Activated T-helper 1 cell treated with anti-CD3 and anti-CD28 coated beads, Interleukin-12 subunit alpha, Interleukin-12 subunit beta, Interleukin-2, Interleukin-4 antibody, amounts not matched to agents 30 ng/mL and 10 ng/mL and 1 ng/mL, durations not matched to agents 14 hours and 24 hours and 36 hours (primary cell): ENCODE measurements at regions of chr5 and their contacts with region 1.

Region 1: GRCh38 chr5:142783601-142784341 is 13.6 kb downstream of the ARHGAP26 start:
- DNase-seq: peak; percentile 57
- H3K4me3 Mint-ChIP-seq: peak overlapping the region; percentile 32
- H3K27ac Mint-ChIP-seq: peak overlapping the region; percentile 62
- H3K4me1 Mint-ChIP-seq: peaks cover 63% of the 10 kb centered on the region
- H3K27me3 Mint-ChIP-seq: no peaks in the 10 kb centered on the region

Region 2: DNA sequence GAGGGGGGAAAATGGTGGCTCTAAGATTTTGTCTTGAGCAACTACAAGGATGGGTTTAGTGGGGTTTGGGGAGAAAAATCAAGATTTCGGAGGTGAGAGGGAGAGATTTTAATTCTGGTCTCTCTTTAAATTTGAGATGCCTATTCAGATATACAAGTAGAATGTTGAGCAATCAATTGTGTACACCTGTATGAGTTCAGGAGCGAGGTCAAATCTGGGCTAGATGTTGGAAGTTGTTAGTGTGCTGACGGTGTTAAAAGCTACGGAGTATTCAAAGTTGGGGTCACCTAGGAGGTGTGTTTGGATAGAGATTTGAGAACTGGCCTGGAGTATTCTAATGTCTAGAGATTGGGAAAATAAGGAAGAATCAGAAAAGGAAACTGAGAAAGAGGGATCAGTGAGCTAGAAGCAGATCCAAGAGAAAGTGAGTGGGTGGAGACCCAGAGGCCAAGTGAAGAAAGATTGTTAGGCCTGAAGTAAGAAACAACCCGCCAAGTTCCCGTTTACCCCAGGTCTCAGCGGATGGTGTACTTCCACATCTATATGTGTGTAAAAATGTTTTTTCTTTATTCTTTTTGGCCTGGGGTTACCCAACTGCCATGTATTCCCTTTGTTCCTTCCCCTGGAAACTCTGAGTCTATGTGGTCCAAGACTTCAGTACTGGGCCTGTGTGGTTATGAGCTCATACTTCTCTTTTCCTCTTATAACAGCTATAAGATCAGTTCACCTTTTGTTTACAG is 25.5 kb before region 1 on chr5:
- intact Hi-C with region 1: loop called (anchors 1 kb)
- DNase-seq: no peak
- H3K4me3 Mint-ChIP-seq: no peak overlapping the region
- H3K27ac Mint-ChIP-seq: peak overlapping the region; percentile 10
- H3K4me1 Mint-ChIP-seq: peaks cover 18% of the 10 kb centered on the region
- H3K27me3 Mint-ChIP-seq: peaks cover 6% of the 10 kb centered on the region

Region 3: GRCh38 chr5:142800776-142801494 is 17.2 kb after region 1 on chr5:
- intact Hi-C with region 1: loop called (anchors 1 kb)
- DNase-seq: peak; percentile 53
- H3K4me3 Mint-ChIP-seq: peak overlapping the region; percentile 73
- H3K27ac Mint-ChIP-seq: peak overlapping the region; percentile 93
- H3K4me1 Mint-ChIP-seq: peaks cover 67% of the 10 kb centered on the region
- H3K27me3 Mint-ChIP-seq: no peaks in the 10 kb centered on the region

Region 4: GRCh38 chr5:142826741-142827732 is 43.3 kb after region 1 on chr5:
- intact Hi-C with region 1: loop called (anchors 1 kb)
- DNase-seq: no peak
- H3K4me3 Mint-ChIP-seq: peak overlapping the region; percentile 25
- H3K27ac Mint-ChIP-seq: peak overlapping the region; percentile 57
- H3K4me1 Mint-ChIP-seq: peaks cover 70% of the 10 kb centered on the region
- H3K27me3 Mint-ChIP-seq: no peaks in the 10 kb centered on the region

Region 5: DNA sequence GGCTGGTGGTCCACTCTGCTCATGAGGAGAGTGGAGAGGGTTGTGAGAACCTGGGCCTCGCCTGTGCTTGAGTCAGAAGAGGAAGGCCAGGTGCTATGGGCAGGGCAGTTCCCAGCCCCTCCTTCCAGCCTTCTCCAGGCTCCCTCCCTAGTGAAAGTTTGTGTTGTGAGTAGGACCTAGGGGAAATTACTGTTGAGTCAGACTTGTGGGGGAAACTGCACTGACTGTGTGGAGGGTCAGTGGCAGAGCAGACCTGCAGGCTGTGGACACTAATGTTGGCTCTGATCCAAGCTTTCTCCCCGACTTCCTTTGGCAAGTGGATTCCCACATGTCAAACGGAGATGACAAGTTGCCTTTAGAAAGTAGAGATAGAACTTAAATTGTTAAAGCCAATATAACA is 89.0 kb after region 1 on chr5:
- intact Hi-C with region 1: loop called (anchors 1 kb)
- DNase-seq: no peak
- H3K4me3 Mint-ChIP-seq: no peak overlapping the region
- H3K27ac Mint-ChIP-seq: no peak overlapping the region
- H3K4me1 Mint-ChIP-seq: peaks cover 13% of the 10 kb centered on the region
- H3K27me3 Mint-ChIP-seq: peaks cover 3% of the 10 kb centered on the region

Region 6: DNA sequence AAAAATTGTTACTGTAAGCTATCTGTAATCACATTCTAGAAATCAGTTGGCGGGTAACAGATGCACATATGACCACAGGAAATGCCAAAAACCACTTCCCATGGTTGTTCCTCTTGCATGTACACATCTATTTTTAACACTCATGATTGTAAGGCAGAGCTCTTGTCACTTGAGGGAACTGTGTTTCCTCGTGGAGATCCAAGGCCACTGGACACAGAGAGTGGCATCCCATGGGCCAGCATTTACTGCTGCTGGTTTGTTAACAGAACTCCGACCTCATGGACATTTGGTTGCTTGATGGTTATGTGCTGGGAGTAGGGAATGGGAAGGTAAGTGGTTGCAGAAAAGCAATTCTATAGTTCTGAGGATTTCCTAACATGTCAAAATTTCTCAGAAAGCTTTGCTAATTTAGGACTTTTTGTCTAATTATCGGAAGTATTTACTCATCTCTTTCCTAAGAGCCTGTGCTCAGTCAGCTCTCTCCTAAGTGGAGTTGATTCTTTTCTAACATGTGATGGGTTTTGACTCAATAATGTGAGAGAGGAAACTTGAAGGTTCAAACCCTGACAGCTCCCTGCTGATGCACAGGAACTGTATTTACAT is 821.7 kb after region 1 on chr5:
- intact Hi-C with region 1: loop called (anchors 5 kb)
- DNase-seq: peak; percentile 25
- H3K4me3 Mint-ChIP-seq: peak overlapping the region; percentile 56
- H3K27ac Mint-ChIP-seq: peak overlapping the region; percentile 91
- H3K4me1 Mint-ChIP-seq: peaks cover 38% of the 10 kb centered on the region
- H3K27me3 Mint-ChIP-seq: no peaks in the 10 kb centered on the region